Sigmoid colon (tissue), 7 donors: ENCODE measurements at regions of chr19 and their contacts with region 1.

Region 1: GRCh38 chr19:12983542-12984142 is 11.6 kb upstream of the NFIX start:
- DNase-seq: peak; percentile 91
- H3K4me3 ChIP-seq: peak overlapping the region in 3 of 4 donors; percentile 32 to 38 (median 38)
- H3K27ac ChIP-seq: peak overlapping the region in 2 of 4 donors; percentile 37 to 51
- H3K4me1 ChIP-seq: peaks cover 0 to 9% (median 7%) of the 10 kb centered on the region in 4 donors
- H3K27me3 ChIP-seq: no peaks in the 10 kb centered on the region
- CTCF ChIP-seq: peak; percentile 89 to 96 (median 94)
- EP300 ChIP-seq: no peak
- POLR2A ChIP-seq: no peak

Region 2: DNA sequence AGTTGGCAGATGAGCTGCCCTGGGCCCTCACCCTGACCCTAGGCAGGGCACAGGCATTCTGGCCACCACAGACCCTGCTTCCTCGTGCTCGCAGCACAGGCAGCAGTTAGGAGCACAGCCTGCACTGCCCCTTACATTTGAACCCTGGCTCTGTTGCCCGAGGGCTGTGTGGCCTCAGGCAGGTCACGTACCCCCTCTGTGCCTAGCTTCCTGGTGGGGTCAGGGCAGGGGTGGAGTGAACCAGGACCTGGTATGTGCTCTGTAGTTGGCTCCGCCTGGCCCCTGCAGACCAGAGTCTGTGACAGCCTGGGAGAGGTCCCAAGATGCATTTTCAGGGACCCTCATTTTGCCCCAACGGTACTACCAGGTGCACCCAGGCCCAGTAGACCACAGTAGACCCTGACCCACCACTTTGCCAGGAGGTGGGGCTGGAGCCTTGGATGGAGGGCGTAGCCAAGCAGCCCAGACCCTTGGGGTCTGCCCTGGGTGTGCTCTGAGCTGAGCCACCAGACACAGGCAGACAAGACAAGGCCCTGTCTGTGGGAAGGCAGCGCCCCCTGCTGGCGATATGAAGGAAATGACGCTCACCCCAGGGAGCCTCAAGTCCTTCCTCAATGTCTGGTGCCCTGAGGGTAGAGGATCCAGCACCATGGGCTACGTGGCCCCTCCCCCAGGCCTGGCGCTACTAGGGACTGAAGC is 109.9 kb after region 1 on chr19:
- intact Hi-C with region 1: loop called (anchors 1 kb)
- DNase-seq: peak; percentile 95
- H3K4me3 ChIP-seq: no peak overlapping the region
- H3K27ac ChIP-seq: peak overlapping the region; percentile 81 to 95 (median 86)
- H3K4me1 ChIP-seq: peaks cover 0 to 95% (median 84%) of the 10 kb centered on the region in 4 donors
- H3K27me3 ChIP-seq: no peaks in the 10 kb centered on the region
- CTCF ChIP-seq: peak; percentile 89 to 96 (median 94)
- EP300 ChIP-seq: no peak
- POLR2A ChIP-seq: no peak

Region 3: DNA sequence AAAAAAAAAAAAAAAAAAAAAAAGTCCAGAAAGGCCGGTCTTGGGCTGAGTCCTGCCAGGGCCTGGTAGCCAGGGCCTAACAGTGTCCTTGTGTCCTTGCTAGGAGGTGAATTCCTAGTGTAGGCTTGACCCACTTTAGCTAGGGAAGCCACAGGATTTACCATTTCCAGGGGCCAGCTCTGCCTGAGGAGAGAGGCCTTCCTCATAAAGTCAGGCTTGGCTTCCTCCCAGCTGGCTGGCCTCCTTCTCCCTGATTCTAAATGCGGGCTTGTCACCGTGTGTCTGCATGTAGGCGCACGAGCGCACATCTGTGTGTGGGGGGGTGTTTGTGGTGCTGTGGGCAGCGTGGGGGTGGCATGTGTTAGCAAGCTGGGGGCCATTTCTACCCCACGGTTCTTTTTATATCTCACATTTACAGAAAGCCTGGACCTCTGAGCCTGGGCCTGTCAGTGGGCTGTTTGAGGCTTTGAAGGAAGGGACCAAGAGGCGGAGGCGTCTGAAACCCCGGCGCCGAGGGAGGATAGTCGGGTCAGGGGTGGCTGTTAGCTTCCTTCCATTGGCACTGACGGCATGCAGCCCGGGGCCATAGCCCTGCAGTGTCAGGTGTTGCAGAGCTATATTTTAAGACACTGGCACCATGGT is 198.2 kb after region 1 on chr19:
- intact Hi-C with region 1: no loop called
- DNase-seq: peak; percentile 90
- H3K4me3 ChIP-seq: no peak overlapping the region
- H3K27ac ChIP-seq: peak overlapping the region; percentile 33 to 55 (median 42)
- H3K4me1 ChIP-seq: peaks cover 0 to 15% (median 13%) of the 10 kb centered on the region in 4 donors
- H3K27me3 ChIP-seq: no peaks in the 10 kb centered on the region
- CTCF ChIP-seq: no peak
- EP300 ChIP-seq: no peak
- POLR2A ChIP-seq: no peak